Left cardiac atrium (tissue), 4 donors: ENCODE measurements at regions of chr3 and their contacts with region 1.

Region 1: GRCh38 chr3:133661454-133662277 is at the start of gene TOPBP1:
- DNase-seq: peak; percentile 86
- ATAC-seq: peak; percentile 95 to 96
- total RNA-seq, gene TOPBP1: 12.0 to 12.4 TPM

Region 2: DNA sequence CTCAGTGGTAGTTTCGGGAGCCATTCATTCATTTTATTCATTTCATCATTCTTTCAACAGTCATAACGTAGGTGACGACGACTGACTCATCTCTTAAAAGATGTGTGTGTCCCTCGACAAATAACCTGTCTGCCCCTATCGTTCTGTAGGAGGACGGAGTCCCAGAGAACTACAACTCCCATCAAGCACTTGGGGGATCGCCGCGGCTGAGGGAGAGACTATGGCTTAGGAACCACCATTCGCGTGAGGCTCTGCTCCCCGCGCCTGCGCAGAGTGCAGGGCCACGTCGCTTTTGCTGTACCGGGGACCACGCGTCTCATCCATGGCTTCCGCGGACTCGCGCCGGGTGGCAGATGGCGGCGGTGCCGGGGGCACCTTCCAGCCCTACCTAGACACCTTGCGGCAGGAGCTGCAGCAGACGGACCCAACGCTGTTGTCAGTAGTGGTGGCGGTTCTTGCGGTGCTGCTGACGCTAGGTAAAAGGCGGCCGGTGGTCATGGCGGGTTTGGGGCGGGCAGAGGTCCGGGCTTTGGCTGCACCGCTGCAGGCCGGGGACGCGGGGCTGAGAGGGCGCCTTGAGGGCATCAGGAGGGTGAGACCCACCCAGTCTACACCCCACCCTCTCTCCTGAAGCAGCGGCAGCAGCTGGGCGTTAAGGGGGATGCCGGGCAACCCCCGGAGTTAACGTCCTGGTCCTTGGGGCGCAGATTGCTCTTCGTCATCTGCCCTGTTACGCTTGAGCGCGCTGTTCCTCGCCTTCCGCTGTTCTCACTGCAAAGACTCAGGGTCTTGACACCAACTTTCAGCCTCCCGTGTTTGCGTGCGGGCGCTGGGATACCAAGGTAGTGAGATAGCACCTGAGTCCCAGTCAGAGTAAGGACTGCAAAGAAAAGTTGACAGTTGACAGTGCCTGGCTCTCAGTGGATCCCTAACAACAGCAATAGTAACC is 144.1 kb after region 1 on chr3 and contains the start of gene SRPRB:
- intact Hi-C with region 1: loop called (anchors 5 to 10 kb)
- DNase-seq: peak; percentile 97
- ATAC-seq: peak; percentile 100
- total RNA-seq, gene SRPRB: 36.8 to 51.8 TPM